Natural killer cell (primary cell): ENCODE measurements at regions of chr17 and their contacts with region 1.

Region 1: DNA sequence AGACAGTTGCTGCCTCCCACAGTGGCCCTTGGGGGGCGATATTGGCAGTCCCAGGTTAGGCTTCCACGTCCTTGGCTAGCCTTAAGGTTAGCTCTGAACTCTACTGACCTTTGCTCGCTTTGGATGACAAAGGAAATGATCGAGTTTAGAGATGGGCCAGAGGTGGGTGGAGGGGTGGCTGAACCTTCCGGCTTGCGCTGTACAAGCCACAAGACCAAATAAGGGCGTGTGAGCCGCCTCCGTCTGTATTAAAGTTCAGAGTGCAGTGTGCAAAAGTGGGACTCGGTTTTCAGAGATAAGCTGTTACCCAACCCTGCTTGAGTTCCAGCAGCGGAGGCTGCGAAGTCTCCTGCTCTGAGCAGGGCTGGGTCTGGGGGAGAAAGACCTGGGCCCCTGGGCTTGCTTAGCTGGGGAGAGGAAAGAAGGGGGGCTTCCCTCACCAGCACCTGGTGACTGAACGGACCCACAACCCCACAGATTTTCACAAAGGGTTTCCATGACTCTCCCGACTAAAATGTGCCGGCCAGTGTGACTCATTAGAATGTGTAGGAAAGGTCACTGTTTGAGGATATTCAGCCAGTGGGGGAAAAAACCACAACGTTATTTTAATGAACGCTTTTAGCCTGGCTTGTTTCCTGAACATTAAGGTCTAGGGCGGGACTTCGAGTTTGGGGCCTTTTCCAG is 67.2 kb downstream of the CENPV start:
- DNase-seq: peak; percentile 73 to 88
- ATAC-seq: peak; percentile 91 to 98 (median 96)
- H3K4me3 ChIP-seq: peak overlapping the region; percentile 4
- H3K4me3 Mint-ChIP-seq: peak overlapping the region; percentile 83
- H3K27ac ChIP-seq: peak overlapping the region; percentile 87
- H3K27ac Mint-ChIP-seq: peak overlapping the region; percentile 98 to 100
- H3K4me1 ChIP-seq: peaks cover 43% of the 10 kb centered on the region
- H3K4me1 Mint-ChIP-seq: peaks cover 45 to 46% of the 10 kb centered on the region in 2 donors
- H3K27me3 ChIP-seq: no peaks in the 10 kb centered on the region
- H3K27me3 Mint-ChIP-seq: no peaks in the 10 kb centered on the region
- CTCF ChIP-seq: no peak

Region 2: DNA sequence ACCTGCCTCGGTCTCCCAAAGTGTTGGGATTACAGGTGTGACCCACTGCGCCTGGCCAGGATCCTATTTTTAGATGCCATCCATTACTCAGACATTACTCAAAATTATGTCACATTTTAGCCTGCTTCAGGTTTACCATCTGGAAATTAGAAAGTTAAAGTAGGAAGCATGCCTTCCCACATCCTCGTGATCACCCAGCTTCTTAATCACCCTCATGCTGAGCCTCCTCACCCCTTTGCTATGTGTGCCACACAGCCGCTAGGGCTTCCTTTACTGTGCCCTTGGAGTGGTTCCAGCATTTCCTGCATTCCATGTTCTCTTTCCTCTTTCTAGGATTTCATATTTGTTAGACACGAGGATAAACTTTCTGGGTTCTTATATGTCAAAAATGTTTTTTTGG is 331.9 kb before region 1 on chr17:
- intact Hi-C with region 1: no loop called
- DNase-seq: no peak
- ATAC-seq: no peak
- H3K4me3 ChIP-seq: no peak overlapping the region
- H3K4me3 Mint-ChIP-seq: no peak overlapping the region
- H3K27ac ChIP-seq: no peak overlapping the region
- H3K27ac Mint-ChIP-seq: no peak overlapping the region
- H3K4me1 ChIP-seq: peaks cover 5% of the 10 kb centered on the region
- H3K4me1 Mint-ChIP-seq: peaks cover 7 to 11% of the 10 kb centered on the region in 2 donors
- H3K27me3 ChIP-seq: no peaks in the 10 kb centered on the region
- H3K27me3 Mint-ChIP-seq: peaks cover 0 to 11% of the 10 kb centered on the region in 2 donors
- CTCF ChIP-seq: no peak

Region 3: GRCh38 chr17:16215273-16215964 is 70.7 kb before region 1 on chr17 and contains the start of gene NCOR1:
- intact Hi-C with region 1: loop called (anchors 1 kb)
- DNase-seq: peak; percentile 81 to 93
- ATAC-seq: peak; percentile 89 to 96 (median 91)
- H3K4me3 ChIP-seq: peak within 1 kb of the TSS; percentile 44
- H3K4me3 Mint-ChIP-seq: peak within 1 kb of the TSS; percentile 94
- H3K27ac ChIP-seq: peak within 1 kb of the TSS; percentile 57
- H3K27ac Mint-ChIP-seq: peak within 1 kb of the TSS; percentile 90 to 95
- H3K4me1 ChIP-seq: peaks cover 30% of the 10 kb centered on the region
- H3K4me1 Mint-ChIP-seq: peaks cover 37 to 38% of the 10 kb centered on the region in 2 donors
- H3K27me3 ChIP-seq: no peaks in the 10 kb centered on the region
- H3K27me3 Mint-ChIP-seq: no peaks in the 10 kb centered on the region
- CTCF ChIP-seq: peak; percentile 20
- total RNA-seq, gene NCOR1: 195 to 238 (median 238) TPM

Region 4: DNA sequence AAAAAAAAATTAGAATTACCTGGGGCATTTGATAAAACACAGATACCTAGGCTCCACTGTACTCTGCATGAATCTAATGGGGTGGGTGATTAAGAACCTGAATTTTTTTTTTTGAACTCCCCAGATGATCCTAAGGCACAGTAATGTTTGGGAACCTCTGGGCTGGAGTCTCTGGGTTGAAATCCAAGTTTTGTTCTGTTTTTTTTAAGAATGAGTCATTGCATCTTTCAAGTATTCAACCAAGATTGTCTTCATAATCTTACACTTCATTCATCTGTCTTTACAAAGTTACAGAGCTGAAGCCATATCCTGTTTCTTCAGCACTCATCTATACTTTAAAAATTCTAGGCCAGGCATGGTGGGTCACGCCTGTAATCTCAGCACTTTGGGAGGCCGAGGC is 16.4 kb before region 1 on chr17:
- intact Hi-C with region 1: loop called (anchors 1 kb)
- DNase-seq: no peak
- ATAC-seq: peak in 1 of 3 donors; percentile 42
- H3K4me3 ChIP-seq: no peak overlapping the region
- H3K4me3 Mint-ChIP-seq: peak overlapping the region; percentile 68
- H3K27ac ChIP-seq: no peak overlapping the region
- H3K27ac Mint-ChIP-seq: peak overlapping the region; percentile 47 to 65
- H3K4me1 ChIP-seq: peaks cover 21% of the 10 kb centered on the region
- H3K4me1 Mint-ChIP-seq: peaks cover 32 to 45% of the 10 kb centered on the region in 2 donors
- H3K27me3 ChIP-seq: no peaks in the 10 kb centered on the region
- H3K27me3 Mint-ChIP-seq: no peaks in the 10 kb centered on the region
- CTCF ChIP-seq: no peak

Region 5: GRCh38 chr17:16353317-16354174 is 67.4 kb after region 1 on chr17 and contains the start of gene CENPV:
- intact Hi-C with region 1: loop called (anchors 5 kb)
- DNase-seq: peak; percentile 66 to 86
- ATAC-seq: peak; percentile 90 to 94 (median 93)
- H3K4me3 ChIP-seq: peak within 1 kb of the TSS; percentile 56
- H3K4me3 Mint-ChIP-seq: peak within 1 kb of the TSS; percentile 92
- H3K27ac ChIP-seq: peak within 1 kb of the TSS; percentile 56
- H3K27ac Mint-ChIP-seq: peak within 1 kb of the TSS; percentile 78 to 79
- H3K4me1 ChIP-seq: peaks cover 13% of the 10 kb centered on the region
- H3K4me1 Mint-ChIP-seq: peaks cover 10% of the 10 kb centered on the region in 2 donors
- H3K27me3 ChIP-seq: no peaks in the 10 kb centered on the region
- H3K27me3 Mint-ChIP-seq: peaks cover 0 to 3% of the 10 kb centered on the region in 2 donors
- CTCF ChIP-seq: peak; percentile 34
- total RNA-seq, gene CENPV: 11.3 to 20.0 (median 15.1) TPM